Natural killer cell (primary cell): ENCODE measurements at regions of chr1 and their contacts with region 1.

Region 1: DNA sequence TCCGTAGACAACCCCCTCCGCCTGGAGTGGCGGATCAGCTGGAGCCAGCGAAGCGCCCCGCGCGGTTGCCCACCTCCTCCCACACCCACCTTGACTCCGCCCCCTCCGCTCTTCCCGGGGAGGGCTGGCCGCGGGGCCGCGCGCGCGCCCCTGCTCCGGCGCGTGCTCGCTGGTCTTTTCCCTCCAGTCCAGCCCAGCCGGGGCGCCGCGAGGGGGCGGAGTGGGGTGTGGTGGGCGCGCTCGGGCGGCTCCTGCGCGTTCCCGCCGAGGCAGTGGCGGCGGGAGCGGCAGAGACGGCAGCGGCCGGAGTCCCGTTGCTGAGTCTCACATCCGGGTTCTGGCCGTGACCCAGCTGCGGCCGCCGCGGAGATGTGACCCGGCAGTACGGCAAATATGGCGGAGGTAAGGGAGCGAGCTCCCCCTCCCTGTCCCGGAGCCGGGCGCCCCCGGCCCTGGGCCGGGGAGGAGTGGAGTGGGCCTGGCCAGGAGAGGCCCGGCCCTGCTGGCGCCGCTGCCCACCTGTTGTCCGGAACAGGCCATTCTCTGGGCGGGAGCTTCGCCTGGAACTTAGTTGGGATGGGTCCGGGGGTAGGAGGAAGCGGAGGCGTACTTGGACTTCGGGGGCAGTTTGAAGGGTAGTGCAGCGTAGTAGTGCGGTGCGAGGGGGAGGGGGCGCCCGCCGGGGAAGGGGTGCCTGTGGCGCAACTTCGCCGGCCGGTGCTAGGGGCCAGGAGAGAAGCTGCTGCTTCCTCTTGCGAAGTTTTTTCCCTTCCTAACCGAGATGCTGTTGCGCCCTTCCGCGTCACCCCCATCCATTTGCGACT is 5.4 kb downstream of the MIER1 start:
- DNase-seq: peak; percentile 94 to 97
- ATAC-seq: peak; percentile 73 to 93 (median 76)
- H3K4me3 ChIP-seq: peak overlapping the region; percentile 92
- H3K4me3 Mint-ChIP-seq: peak overlapping the region; percentile 100
- H3K27ac ChIP-seq: peak overlapping the region; percentile 92
- H3K27ac Mint-ChIP-seq: peak overlapping the region; percentile 95 to 98
- H3K4me1 ChIP-seq: peaks cover 18% of the 10 kb centered on the region
- H3K4me1 Mint-ChIP-seq: peaks cover 57 to 61% of the 10 kb centered on the region in 2 donors
- H3K27me3 ChIP-seq: no peaks in the 10 kb centered on the region
- H3K27me3 Mint-ChIP-seq: no peaks in the 10 kb centered on the region
- CTCF ChIP-seq: no peak

Region 2: DNA sequence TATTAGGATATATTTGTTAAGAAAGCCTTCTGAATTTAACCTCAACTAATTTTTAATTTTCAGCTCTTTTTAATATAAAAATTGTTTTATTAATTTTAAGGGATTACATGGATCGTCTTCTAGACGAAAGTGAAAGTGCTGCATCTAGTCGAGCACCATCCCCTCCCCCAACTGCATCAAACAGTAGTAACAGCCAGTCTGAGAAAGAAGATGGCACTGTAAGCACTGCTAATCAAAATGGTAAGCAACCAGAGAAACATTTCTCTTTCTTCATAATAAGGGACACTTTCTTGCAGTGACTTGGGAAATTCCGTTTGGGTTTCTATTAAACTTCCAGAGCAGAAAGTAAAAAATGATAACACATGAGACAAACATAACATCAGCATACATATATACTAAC is 51.5 kb after region 1 on chr1:
- intact Hi-C with region 1: loop called (anchors 5 kb)
- DNase-seq: peak in 1 of 2 donors; percentile 86
- ATAC-seq: peak; percentile 79 to 97 (median 91)
- H3K4me3 ChIP-seq: peak overlapping the region; percentile 20
- H3K4me3 Mint-ChIP-seq: peak overlapping the region; percentile 62
- H3K27ac ChIP-seq: peak overlapping the region; percentile 65
- H3K27ac Mint-ChIP-seq: peak overlapping the region; percentile 89 to 91
- H3K4me1 ChIP-seq: no peaks in the 10 kb centered on the region
- H3K4me1 Mint-ChIP-seq: peaks cover 15 to 17% of the 10 kb centered on the region in 2 donors
- H3K27me3 ChIP-seq: no peaks in the 10 kb centered on the region
- H3K27me3 Mint-ChIP-seq: no peaks in the 10 kb centered on the region
- CTCF ChIP-seq: no peak